GM10248 (cell line): ENCODE measurements at regions of chr3 and their contacts with region 1.

Region 1: DNA sequence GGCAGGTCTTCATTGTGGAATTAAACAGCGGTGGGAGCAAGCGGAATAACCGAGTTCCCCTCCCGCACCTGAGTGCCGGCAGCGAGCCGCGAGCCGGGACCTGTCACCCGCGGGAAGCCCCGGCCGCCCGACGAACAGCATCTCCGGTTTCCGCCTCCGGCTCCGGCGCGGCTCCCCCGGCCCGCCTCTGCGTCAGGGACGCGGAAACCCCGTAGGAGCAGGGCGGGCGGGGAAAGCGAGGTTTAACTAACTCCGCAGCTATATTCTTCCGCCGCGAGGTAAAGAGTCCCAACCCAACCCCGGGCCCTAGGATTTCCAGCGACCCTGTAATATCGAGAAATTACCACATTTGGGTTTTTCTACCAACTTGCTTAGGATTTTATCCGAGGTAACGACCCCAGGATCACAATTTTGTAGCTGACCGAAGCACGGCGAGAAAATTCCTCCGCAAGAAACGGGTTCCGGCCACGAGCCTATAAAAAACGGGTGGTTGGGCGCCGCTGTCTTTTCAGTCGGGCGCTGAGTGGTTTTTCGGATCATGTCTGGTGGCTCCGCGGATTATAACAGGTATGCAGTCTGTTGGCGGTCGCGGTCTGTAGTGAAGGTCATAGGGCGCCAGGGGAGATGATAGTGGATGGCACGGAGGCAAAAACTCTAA is at the start of gene EIF4A2:
- DNase-seq: peak; percentile 94
- CTCF ChIP-seq: no peak

Region 2: DNA sequence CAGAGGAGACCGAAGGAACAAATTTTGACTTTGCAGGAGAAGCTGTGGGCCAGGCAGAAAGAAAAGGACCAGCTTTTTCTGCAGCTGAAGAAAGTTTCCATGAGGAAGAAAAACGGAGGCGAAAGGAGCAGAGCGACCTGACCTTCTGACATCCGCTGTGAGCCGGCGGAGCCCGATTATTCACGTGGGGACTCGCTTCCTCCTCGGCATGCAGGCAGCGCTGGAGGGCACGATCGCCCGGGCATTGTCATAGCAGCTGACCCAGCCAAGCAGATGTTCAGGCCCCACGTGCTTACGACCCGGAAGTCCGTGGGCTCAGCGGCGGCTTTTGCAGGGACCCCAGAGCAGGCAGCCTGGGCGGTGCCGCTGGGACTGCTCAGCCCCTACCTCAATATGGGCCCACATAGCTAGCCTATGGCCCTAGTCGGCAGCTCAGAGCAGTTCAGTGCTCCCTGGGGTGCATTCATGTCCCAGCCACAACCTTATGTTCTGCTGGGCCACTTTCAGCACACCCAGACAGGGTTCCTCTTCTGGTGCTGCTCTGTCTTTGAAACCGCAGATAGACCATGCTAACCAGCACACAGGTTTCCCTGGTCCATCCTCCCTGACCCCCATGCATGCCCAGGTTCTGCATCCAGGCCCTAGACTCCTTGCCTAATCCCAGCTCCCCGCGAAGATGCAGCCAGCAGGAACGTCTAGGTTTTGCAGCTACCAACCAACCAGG is 10.3 kb before region 1 on chr3:
- CTCF ChIA-PET with region 1: no interaction called
- POLR2A ChIA-PET with region 1: interaction called, 15 read pairs
- DNase-seq: peak; percentile 84
- CTCF ChIP-seq: no peak

Region 3: GRCh38 chr3:186798239-186798874 is 15.2 kb after region 1 on chr3:
- CTCF ChIA-PET with region 1: no interaction called
- POLR2A ChIA-PET with region 1: interaction called, 17 read pairs
- DNase-seq: no peak
- CTCF ChIP-seq: no peak

Region 4: DNA sequence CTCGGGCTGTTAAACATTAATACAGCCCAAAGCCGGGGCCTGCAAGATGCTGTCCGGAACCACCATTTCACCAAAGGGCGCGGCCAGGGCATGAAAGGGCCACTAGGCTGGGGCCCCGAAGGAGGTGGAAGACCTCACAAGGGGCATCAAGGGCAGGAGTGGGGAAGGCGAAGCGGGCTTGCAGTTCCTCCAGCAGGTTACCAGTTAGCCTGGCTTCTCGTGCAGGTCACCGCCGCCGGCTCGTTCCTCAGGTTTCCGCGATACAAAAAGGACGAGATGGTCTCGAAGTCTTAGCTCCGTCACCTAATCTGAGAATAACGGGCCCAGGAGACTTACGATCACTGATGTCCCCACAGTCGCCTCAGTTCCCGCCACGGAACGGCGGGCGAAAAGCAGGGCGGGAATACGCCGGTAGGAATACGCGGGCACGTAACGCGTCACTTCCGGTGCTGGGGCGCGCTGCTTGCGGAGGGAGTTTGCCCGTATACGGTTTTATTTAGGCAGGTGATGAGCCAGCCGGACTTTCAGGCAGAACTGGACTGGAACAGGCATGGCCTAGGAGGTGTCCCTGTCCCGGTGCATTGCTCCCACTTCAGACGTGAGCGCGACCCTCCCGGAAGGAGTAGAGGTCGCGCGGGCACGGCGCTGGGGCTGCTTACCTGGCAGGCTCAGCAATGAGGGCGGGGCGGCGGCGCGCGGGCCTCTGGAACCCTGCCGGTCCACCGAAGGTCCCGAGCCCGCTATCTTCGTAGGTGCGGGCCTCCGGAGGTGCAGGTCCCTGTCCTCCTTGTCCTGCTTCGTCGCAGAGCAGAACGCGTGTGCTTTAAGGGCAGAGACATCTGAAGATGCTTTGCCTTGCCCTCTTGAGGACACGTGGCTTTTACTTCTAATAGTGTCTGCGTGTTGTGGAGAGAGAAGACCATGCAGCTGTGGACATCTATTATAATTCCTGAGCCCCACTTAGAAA is 23.2 kb after region 1 on chr3 and contains the start of gene RFC4:
- CTCF ChIA-PET with region 1: no interaction called
- POLR2A ChIA-PET with region 1: interaction called, 10 read pairs
- DNase-seq: peak; percentile 86
- CTCF ChIP-seq: no peak